Activated naive CD4-positive, alpha-beta T cell treated with anti-CD3 and anti-CD28 coated beads, Interleukin-2, amount 10 ng/mL, durations not matched to agents 7 days and 5 days (primary cell): ENCODE measurements at regions of chr22 and their contacts with region 1.

Region 1: DNA sequence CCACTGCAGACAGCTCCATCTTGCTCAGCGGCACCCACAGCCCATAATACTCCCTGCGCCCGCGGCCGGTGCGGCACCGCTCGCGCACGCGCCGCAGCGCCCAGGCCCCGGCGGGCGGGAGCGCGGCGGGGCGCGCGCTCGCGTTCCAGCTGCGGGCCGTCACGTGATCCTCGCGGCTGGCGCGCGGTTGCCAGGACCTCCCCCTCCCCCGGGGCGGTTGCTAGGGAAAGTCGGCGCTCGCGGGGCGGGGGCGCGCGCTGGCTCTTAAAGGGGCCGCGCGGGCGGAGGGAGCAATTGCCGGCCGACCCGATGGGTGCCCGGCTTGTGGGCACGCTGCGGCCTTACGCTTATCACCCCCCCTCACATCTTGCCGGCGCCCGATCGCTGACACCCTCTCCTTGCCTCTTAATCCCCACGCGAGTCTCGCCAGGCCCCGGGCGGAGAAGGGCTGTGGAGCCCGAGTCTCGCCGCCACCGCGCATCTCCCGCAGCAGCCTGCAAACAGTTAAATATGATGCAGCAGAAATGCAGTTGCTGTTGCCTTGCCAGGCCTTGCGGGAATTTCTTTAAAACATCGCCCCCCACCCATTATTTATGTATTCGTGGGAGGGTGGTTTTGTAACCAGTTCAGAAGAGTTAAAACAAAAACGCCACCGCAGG is at the start of gene CBX6:
- DNase-seq: peak; percentile 94
- H3K4me3 Mint-ChIP-seq: peak within 1 kb of the TSS; percentile 93
- H3K27ac Mint-ChIP-seq: peak within 1 kb of the TSS; percentile 88
- H3K4me1 Mint-ChIP-seq: peaks cover 53% of the 10 kb centered on the region
- H3K27me3 Mint-ChIP-seq: peaks cover 34% of the 10 kb centered on the region

Region 2: DNA sequence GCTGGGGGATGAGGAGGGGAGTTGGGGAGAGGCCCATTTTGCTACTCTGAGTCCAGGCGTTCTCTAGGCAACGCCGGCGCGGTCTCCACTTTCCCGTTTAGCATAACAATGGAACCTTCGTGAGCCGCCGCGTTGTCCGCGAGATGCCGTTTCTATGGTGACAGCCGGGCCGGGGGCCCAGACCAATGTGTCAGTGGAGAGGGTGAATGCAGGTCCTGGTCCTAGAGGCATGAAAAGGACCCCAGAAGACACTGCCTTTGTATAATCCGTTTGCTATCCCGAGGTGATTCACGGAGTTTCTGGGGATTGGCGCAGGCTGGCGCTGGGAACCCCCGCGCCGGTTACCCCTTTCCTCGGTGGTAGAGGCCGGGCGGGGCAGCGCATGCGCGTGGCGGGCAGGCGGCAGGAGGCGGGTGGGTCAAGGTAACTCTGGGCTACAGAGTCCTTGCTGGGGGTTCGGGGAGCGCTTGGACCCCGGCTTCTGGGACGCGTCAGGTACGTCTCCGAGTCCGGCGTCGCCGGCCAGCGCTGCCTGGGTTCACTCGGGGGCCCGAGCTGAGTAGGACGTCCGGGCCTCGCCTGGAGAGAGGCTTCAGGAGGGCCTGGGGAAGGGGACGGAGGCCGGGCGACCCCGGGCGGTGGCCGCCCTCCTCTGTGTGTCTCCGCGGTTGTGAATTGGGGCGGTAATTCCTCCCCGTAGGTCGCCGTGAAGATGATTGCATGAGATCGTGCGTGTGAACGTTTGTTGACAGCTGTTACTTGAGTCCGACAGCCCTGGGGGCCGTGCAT is 215.9 kb before region 1 on chr22 and contains the starts of genes CBY1 and FAM227A:
- CTCF ChIA-PET with region 1: no interaction called
- DNase-seq: peak; percentile 87
- H3K4me3 Mint-ChIP-seq: peak within 1 kb of the TSS; percentile 93
- H3K27ac Mint-ChIP-seq: peak within 1 kb of the TSS; percentile 94
- H3K4me1 Mint-ChIP-seq: peaks cover 27% of the 10 kb centered on the region
- H3K27me3 Mint-ChIP-seq: no peaks in the 10 kb centered on the region

Region 3: GRCh38 chr22:38766076-38766777 is 106.1 kb before region 1 on chr22:
- CTCF ChIA-PET with region 1: interaction called, 29 read pairs
- DNase-seq: peak; percentile 61
- H3K4me3 Mint-ChIP-seq: no peak overlapping the region
- H3K27ac Mint-ChIP-seq: no peak overlapping the region
- H3K4me1 Mint-ChIP-seq: peaks cover 4% of the 10 kb centered on the region
- H3K27me3 Mint-ChIP-seq: peaks cover 24% of the 10 kb centered on the region

Region 4: GRCh38 chr22:38831166-38831945 is 40.9 kb before region 1 on chr22:
- CTCF ChIA-PET with region 1: no interaction called
- DNase-seq: no peak
- H3K4me3 Mint-ChIP-seq: no peak overlapping the region
- H3K27ac Mint-ChIP-seq: no peak overlapping the region
- H3K4me1 Mint-ChIP-seq: no peaks in the 10 kb centered on the region
- H3K27me3 Mint-ChIP-seq: peaks cover 7% of the 10 kb centered on the region

Region 5: DNA sequence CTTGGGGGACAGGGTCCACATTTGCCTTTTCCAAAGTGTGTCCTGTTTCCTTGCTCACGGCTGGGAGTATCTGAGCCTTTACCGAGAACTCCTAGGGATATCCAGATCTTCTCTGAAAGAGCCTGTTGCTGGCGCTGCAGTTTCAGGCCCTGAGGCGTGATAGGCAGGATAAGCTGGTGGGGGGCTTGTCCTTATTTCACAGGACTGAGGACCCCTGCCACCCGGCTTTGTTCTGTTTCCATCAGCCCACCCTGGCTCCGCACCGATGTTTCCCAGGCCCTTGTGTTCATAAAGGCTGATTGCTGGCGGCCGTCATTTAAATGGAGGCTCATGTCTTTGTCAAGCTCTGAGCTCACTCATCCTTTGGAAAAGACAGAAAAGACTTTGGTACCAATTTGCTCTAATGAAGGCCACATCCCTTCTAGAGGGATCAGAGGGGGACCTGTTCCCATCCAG is 19.1 kb before region 1 on chr22:
- CTCF ChIA-PET with region 1: interaction called, 34 read pairs
- DNase-seq: no peak
- H3K4me3 Mint-ChIP-seq: no peak overlapping the region
- H3K27ac Mint-ChIP-seq: no peak overlapping the region
- H3K4me1 Mint-ChIP-seq: no peaks in the 10 kb centered on the region
- H3K27me3 Mint-ChIP-seq: peaks cover 61% of the 10 kb centered on the region

Region 6: DNA sequence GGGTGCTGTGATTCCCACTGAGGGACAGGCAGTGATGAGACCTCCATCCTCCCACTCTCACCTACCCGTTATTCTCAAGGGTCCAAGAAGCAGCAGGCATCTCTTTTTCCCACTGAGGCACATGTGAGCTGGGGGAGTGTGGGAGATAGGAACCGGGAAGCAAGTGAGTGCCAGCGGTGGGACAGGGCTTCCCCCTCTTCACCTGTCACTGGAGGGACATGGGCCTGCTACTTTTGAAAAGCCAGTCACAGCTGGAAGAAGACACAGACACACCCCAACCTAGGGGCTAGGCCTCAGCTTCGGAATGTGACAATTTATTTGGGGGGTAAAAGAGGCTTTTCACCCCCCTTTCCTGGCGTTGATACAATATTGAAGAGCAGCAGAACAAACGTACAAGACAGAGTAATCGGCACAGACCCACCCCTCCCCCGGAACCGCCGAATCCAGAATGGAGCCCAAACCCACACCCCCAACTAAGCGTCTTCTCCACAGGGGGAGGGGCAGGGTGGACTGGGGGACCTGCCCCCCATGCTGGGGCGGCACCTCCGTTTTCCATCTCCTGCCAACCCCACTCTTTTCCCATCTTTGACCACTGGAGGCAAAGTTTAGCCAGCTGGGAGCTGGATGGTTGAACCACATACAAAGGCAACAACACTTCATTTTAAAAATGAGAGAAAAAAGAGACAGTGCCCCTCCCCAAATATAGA is 11.0 kb before region 1 on chr22:
- CTCF ChIA-PET with region 1: interaction called, 34 read pairs
- DNase-seq: no peak
- H3K4me3 Mint-ChIP-seq: no peak overlapping the region
- H3K27ac Mint-ChIP-seq: no peak overlapping the region
- H3K4me1 Mint-ChIP-seq: no peaks in the 10 kb centered on the region
- H3K27me3 Mint-ChIP-seq: peaks cover 19% of the 10 kb centered on the region

Region 7: GRCh38 chr22:38953577-38954413 is 81.5 kb after region 1 on chr22:
- CTCF ChIA-PET with region 1: interaction called, 18 read pairs
- DNase-seq: peak; percentile 67
- H3K4me3 Mint-ChIP-seq: no peak overlapping the region
- H3K27ac Mint-ChIP-seq: peak overlapping the region; percentile 16
- H3K4me1 Mint-ChIP-seq: peaks cover 18% of the 10 kb centered on the region
- H3K27me3 Mint-ChIP-seq: peaks cover 41% of the 10 kb centered on the region

Region 8: DNA sequence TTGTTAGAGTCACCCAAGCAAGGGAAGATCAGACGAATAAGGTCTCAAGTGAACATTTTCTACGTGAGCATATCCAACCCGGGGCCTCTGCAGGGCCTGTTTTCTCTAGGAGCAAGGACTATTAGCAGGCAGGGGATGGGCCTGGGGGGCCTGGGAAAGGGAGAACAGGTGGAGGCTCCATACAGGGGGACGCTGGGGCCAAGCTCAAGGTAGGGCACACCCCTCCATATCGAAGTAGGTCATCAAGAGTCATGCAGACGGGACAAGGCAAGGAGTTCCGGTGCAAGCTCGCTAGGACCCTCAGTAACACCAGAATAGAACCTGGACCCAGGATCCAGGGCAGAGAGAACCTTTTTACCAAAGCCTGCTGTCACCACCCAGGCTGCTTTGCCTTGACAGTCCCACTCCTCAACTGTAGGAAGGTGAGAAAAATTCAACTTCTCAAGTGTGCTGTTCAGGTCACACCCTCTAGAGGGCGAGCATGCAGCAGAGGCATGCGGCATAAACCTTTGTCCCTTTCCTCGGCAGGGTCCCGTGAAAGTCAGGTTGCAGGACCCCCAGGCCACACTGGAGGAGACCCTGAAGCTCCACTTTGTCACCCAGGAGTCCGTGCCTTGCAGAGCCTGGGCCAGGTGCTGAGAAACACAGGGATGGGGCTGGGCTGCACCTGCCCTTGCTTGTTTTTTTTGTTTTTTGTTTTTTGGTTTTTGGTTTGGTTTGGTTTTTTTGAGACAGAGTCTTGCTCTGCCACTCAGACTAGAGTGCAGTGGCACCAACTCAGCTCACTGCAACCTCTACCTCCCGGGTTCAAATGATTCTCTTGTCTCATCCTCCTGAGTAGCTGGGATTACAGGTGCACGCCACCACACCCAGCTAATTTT is 101.2 kb after region 1 on chr22:
- CTCF ChIA-PET with region 1: interaction called, 46 read pairs
- DNase-seq: peak; percentile 73
- H3K4me3 Mint-ChIP-seq: no peak overlapping the region
- H3K27ac Mint-ChIP-seq: no peak overlapping the region
- H3K4me1 Mint-ChIP-seq: peaks cover 5% of the 10 kb centered on the region
- H3K27me3 Mint-ChIP-seq: peaks cover 85% of the 10 kb centered on the region

Region 9: DNA sequence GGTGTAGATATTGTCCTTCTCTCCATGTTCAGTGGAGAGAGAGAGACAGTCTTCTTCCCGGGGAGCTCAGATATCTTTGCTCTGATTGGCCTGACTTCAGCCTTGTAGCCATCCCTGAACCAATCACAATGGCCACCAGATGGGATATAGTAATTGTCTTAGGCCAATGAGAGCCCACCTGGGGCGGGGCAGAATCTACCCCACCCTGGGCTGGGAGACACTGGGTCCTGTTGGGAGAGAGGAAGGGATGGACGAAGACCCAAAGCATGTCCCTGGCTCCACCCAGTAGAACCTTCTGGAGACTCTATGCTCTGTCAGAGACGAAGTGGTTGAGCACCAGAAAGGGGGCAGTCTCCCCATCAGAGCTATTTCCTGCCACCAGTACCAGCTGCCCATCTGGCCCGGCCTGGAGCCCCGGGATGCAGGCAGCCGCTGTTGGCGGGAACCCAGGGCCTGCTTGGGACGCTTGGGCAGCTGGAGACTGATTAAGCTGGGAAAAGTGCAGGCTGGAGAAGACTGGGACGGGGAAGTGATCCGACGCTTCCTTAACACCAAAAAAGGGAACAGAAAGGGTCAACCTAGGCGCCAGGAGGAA is 311.8 kb after region 1 on chr22:
- CTCF ChIA-PET with region 1: no interaction called
- DNase-seq: no peak
- H3K4me3 Mint-ChIP-seq: no peak overlapping the region
- H3K27ac Mint-ChIP-seq: no peak overlapping the region
- H3K4me1 Mint-ChIP-seq: no peaks in the 10 kb centered on the region
- H3K27me3 Mint-ChIP-seq: peaks cover 58% of the 10 kb centered on the region